ENCODE measurements at regions of chr14 and their contacts with region 1.

Region 1: GRCh38 chr14:49461529-49462401 is 124.4 kb downstream of the RPS29 start:
- DNase-seq: peak; percentile 17 to 73 (median 30)
- ATAC-seq: peak; percentile 89
- H3K4me3 ChIP-seq: no peak overlapping the region
- H3K27ac ChIP-seq: no peak overlapping the region
- H3K4me1 ChIP-seq: no peaks in the 10 kb centered on the region
- H3K27me3 ChIP-seq: no peaks in the 10 kb centered on the region
- CTCF ChIP-seq: peak; percentile 47 to 72 (median 52); a peak in 5 of 6 replicates
- EP300 ChIP-seq: no peak
- POLR2A ChIP-seq: no peak
- RAD21 ChIP-seq: peak; percentile 63 to 72

Region 2: DNA sequence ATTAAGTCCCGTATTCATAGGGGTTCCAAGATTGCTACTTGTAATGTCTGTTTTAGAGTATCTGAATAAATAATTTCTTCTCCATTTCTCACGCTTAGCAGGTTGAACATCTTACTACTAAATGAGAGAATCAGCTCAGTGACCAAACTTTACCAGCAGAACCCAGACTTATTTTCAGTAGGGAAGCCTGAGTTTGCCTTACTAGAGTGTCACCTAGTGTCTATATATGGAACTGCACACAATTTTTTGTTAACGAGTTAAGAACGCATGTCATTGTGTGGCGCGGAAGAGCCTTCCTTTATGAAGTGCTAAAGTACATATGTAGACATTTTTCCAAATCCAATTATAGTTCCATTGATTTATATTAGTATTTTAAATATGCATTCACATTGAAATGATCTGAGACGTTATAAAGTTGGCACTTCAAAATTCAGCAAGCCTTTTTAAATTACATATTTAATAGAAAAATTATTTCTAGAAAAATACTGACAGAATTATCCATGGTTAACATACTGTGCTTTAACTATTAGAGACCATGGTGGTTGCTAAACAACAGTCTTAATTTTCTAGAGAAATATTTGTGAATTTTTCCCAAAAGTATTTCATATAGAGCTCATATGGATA is 36.1 kb after region 1 on chr14:
- CTCF ChIA-PET with region 1: no interaction called
- POLR2A ChIA-PET with region 1: no interaction called
- in situ Hi-C with region 1: no loop called
- intact Hi-C with region 1: loop called (anchors 2 kb)
- DNase-seq: peak; percentile 33 to 67 (median 58)
- ATAC-seq: peak; percentile 86
- H3K4me3 ChIP-seq: no peak overlapping the region
- H3K27ac ChIP-seq: no peak overlapping the region
- H3K4me1 ChIP-seq: no peaks in the 10 kb centered on the region
- H3K27me3 ChIP-seq: no peaks in the 10 kb centered on the region
- CTCF ChIP-seq: peak; percentile 51 to 81 (median 73)
- EP300 ChIP-seq: no peak
- POLR2A ChIP-seq: no peak
- RAD21 ChIP-seq: peak; percentile 55 to 76

Region 3: DNA sequence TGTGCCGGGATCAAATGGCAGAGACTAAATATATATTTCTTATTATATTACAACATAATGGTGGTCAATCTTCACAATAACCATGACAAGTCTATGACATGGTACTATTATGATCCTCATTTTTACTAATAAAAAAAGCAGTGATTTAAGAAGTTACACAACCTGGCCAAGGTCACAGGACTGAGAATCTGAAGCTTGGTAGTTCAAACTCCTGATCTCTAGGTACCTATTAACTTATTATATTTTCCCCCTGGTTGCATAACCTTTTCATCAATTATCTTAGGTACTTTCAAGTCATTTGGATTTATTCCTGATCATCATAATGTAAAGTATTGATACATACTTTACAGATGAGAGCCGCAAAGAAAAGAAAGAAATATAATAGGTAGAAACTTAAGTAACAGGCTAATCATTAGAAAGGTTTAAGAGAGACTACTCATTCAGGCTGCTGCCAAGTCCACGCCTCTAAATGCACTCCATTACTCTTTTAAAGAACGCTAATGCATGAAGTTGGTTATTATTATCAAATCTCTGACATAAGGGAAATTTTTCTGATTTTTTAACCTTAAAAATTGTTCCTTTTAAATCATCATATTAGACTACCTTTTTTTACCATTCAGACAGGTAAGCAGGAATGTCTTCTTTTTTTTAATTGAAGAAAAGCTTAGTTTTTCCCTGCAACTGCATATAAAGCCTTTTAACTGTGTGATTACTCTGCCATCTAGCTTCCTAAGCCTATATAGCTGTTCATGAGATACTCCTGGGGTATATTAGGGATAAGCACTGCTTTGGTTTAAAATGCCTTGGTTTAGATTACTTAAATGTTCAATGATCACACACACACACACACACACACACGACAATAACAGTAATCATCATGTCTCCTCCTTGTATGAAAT is 88.8 kb after region 1 on chr14:
- CTCF ChIA-PET with region 1: no interaction called
- POLR2A ChIA-PET with region 1: no interaction called
- in situ Hi-C with region 1: no loop called
- intact Hi-C with region 1: loop called (anchors 10 kb)
- DNase-seq: peak in 1 of 4 experiments; percentile 11
- ATAC-seq: peak; percentile 72
- H3K4me3 ChIP-seq: no peak overlapping the region
- H3K27ac ChIP-seq: no peak overlapping the region
- H3K4me1 ChIP-seq: no peaks in the 10 kb centered on the region
- H3K27me3 ChIP-seq: no peaks in the 10 kb centered on the region
- CTCF ChIP-seq: peak in 2 of 3 experiments; percentile 10 to 29; a peak in 2 of 6 replicates
- EP300 ChIP-seq: no peak
- POLR2A ChIP-seq: no peak
- RAD21 ChIP-seq: peak in 1 of 2 experiments; percentile 51; a peak in 2 of 4 replicates

Measured in K562 (cell line).